ENCODE measurements at regions of chr5 and their contacts with region 1.

Region 1: DNA sequence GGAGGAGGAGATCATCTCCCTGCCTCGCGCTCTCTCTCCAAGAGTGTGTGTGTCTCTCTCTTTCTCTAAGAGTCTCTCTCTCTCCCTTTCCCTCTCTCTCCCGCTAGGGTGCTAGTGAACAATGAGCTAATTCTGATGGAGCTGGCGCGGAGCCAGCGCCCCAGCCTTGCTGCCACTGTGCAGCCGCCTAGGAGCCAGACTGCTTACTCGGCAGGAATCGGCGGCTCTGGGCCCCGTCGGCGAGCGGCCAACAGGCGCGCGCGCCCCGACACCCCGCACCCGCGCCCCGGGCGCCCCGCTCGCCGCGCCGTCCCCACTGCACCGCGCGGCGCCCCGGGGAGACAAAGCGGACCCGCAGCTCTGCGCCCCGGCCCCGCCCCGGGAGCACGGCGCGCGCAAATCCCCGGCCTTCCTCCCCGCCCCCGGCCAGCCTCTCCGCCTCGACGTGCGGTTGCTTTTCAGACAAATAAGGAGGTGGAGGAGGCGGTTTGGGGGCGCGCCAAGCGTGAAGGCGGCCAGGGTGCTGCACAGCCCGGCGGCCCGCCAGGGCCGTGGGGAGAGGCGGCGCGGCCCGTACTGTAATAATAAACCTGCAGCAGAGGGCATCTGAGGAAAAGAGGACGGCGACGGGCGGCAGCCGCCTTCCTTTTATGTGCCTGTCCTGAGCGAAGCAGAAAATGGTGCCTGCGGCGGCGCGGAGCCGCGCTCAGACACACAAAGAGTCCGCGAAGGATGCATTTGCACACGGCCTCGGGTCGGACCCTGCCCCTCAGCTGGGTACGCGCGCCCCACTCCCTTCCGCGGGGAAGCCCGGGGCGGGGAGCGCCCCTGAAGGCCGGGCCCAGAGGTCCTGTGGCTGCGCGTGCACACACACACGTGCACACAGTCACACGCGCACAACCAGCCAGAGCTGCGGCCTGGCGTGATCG is 625 bp upstream of the NREP start:
- DNase-seq: peak; percentile 70 to 91
- ATAC-seq: peak; percentile 89 to 91
- H3K4me3 ChIP-seq: peak overlapping the region; percentile 73
- H3K27ac ChIP-seq: peak overlapping the region; percentile 92 to 94
- H3K4me1 ChIP-seq: peaks cover 6% of the 10 kb centered on the region; the same call in 2 of the 3 replicates
- CTCF ChIP-seq: no peak; the same call in 2 of the 3 replicates
- EP300 ChIP-seq: no peak
- POLR2A ChIP-seq: peak; percentile 62
- RAD21 ChIP-seq: no peak; a peak in 1 of 5 replicates

Region 2: GRCh38 chr5:111550279-111551020 is 207.2 kb before region 1 on chr5:
- CTCF ChIA-PET with region 1: interaction called, 7 read pairs
- POLR2A ChIA-PET with region 1: interaction called, 22 read pairs
- DNase-seq: peak; percentile 58 to 77
- ATAC-seq: peak; percentile 92 to 99
- H3K4me3 ChIP-seq: no peak overlapping the region
- H3K27ac ChIP-seq: 0 out of 6 replicates have a peak overlapping the region, but pooled peaks of 1 of the 2 experiments have one; percentile 11
- H3K4me1 ChIP-seq: peaks cover 3% of the 10 kb centered on the region; the same call in 2 of the 3 replicates
- CTCF ChIP-seq: peak; percentile 81
- EP300 ChIP-seq: no peak
- POLR2A ChIP-seq: no peak
- RAD21 ChIP-seq: peak; percentile 82 to 89

Region 3: DNA sequence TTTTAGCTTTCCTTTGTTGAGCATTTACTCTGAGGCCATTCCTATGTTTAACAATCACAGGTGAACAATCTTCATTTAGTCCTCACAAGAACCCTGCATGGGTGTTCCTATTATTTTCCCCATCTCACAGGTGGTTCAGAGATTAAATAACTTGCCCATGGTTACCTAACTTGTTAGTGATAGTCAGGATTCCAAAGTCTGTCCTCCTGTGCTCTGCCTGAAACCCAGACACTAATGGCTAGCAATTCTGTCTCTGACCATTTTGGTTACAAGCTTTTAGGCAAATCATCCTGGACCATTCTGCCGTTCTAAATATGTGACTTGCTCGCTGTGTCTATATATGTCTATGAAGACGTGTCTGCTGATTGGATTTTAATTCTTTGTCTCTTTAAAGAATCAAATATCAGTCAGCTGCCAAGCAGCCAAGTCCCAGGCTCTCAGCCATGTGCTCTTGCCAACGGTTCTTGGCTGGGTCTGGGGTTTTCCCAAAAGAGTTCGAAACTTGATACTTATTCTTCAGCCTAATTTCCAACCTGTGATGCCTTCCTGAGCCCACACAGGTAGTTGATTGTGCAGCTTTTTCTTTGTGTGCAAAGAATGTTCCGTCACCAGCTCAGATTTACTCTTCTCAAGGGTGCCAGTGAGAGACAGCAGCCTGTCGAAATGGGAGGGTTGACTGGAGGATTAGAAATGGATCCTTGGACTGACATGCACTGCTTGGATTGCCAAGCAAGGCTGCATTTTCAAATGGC is 122.3 kb before region 1 on chr5:
- CTCF ChIA-PET with region 1: no interaction called
- POLR2A ChIA-PET with region 1: no interaction called
- DNase-seq: no peak
- ATAC-seq: no peak
- H3K4me3 ChIP-seq: no peak overlapping the region
- H3K27ac ChIP-seq: no peak overlapping the region
- H3K4me1 ChIP-seq: no peaks in the 10 kb centered on the region
- CTCF ChIP-seq: no peak
- EP300 ChIP-seq: no peak
- POLR2A ChIP-seq: no peak
- RAD21 ChIP-seq: no peak

Region 4: DNA sequence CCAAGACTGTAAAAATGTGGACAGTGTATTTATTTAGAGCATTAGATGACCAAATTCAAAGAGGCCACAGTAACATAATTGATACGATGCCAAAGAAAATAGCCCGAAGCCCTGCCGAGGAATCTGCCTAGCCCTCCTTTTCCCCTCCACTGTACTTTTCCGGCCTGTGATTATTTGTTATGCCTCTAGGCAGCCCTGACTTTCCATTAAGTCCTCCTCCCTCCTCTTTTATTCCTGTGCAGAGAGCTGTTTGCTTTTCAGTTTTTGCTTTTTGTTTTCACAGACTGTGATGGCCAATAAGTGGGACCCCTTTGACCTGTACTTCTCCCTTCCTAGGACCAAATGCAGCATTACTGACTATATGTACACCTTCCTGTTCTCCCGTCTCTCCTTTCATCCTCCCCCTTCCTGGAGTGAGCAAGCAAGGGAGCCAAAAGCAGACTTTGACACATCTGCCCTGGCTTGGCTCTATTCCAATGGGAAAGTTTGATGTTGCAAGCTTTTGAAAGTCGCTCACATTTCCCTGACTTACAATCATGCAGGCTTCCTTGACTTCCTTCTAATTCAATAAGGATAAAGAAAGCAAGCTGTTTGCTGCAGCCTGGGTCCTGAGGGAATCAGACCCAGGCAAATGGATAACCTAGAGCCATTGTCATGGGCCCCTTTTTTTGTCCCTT is 76.7 kb before region 1 on chr5:
- CTCF ChIA-PET with region 1: interaction called, 4 read pairs
- POLR2A ChIA-PET with region 1: interaction called, 20 read pairs
- DNase-seq: peak; percentile 49 to 92
- ATAC-seq: peak; percentile 95 to 98
- H3K4me3 ChIP-seq: 0 out of 3 replicates have a peak overlapping the region, but pooled peaks have one; percentile 8
- H3K27ac ChIP-seq: peak overlapping the region; percentile 78 to 85
- H3K4me1 ChIP-seq: peaks cover 23% of the 10 kb centered on the region
- CTCF ChIP-seq: no peak
- EP300 ChIP-seq: peak; percentile 46 to 70; a peak in 3 of 5 replicates
- POLR2A ChIP-seq: no peak
- RAD21 ChIP-seq: peak in 1 of 2 experiments; percentile 21; a peak in 1 of 5 replicates

Region 5: DNA sequence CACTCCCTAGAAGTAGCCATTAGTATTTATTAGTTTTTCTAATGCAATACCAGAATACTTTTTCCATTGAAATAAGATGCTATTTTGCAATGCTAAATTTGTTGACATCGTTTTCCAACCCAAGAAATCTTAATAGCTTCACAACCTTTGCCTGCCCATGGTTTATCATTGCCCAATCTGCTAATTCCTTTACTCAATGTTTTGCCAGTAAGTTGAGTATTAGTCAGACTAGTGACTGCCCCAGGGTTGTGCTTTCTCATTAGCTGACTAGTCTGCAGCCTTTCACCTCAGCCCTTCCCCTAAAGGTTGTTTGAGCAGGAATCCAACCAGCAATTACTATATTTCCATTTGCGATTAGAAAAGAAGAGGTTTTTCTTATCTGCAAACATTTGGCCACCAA is 63.4 kb before region 1 on chr5:
- CTCF ChIA-PET with region 1: no interaction called
- POLR2A ChIA-PET with region 1: interaction called, 14 read pairs
- DNase-seq: peak in 1 of 2 experiments; percentile 22
- ATAC-seq: peak; percentile 39 to 74; a peak in 2 of 6 replicates
- H3K4me3 ChIP-seq: no peak overlapping the region
- H3K27ac ChIP-seq: no peak overlapping the region
- H3K4me1 ChIP-seq: peaks cover 11% of the 10 kb centered on the region; the same call in 2 of the 3 replicates
- CTCF ChIP-seq: no peak
- EP300 ChIP-seq: no peak
- POLR2A ChIP-seq: no peak
- RAD21 ChIP-seq: no peak

Region 6: GRCh38 chr5:111954516-111955395 is 197.1 kb after region 1 on chr5:
- CTCF ChIA-PET with region 1: no interaction called
- POLR2A ChIA-PET with region 1: no interaction called
- DNase-seq: no peak
- ATAC-seq: no peak
- H3K4me3 ChIP-seq: no peak overlapping the region
- H3K27ac ChIP-seq: no peak overlapping the region
- H3K4me1 ChIP-seq: no peaks in the 10 kb centered on the region
- CTCF ChIP-seq: no peak
- EP300 ChIP-seq: no peak
- POLR2A ChIP-seq: no peak
- RAD21 ChIP-seq: no peak

Region 7: GRCh38 chr5:112160652-112161391 is 403.2 kb after region 1 on chr5:
- CTCF ChIA-PET with region 1: no interaction called
- POLR2A ChIA-PET with region 1: interaction called, 11 read pairs
- DNase-seq: peak; percentile 68 to 91
- ATAC-seq: peak; percentile 95 to 96
- H3K4me3 ChIP-seq: peak overlapping the region; percentile 95
- H3K27ac ChIP-seq: peak overlapping the region; percentile 82 to 98
- H3K4me1 ChIP-seq: peaks cover 23% of the 10 kb centered on the region
- CTCF ChIP-seq: peak; percentile 79
- EP300 ChIP-seq: no peak
- POLR2A ChIP-seq: peak; percentile 95
- RAD21 ChIP-seq: peak in 1 of 2 experiments; percentile 37; a peak in 2 of 5 replicates